ENCODE measurements at regions of chr19 and their contacts with region 1.

Region 1: DNA sequence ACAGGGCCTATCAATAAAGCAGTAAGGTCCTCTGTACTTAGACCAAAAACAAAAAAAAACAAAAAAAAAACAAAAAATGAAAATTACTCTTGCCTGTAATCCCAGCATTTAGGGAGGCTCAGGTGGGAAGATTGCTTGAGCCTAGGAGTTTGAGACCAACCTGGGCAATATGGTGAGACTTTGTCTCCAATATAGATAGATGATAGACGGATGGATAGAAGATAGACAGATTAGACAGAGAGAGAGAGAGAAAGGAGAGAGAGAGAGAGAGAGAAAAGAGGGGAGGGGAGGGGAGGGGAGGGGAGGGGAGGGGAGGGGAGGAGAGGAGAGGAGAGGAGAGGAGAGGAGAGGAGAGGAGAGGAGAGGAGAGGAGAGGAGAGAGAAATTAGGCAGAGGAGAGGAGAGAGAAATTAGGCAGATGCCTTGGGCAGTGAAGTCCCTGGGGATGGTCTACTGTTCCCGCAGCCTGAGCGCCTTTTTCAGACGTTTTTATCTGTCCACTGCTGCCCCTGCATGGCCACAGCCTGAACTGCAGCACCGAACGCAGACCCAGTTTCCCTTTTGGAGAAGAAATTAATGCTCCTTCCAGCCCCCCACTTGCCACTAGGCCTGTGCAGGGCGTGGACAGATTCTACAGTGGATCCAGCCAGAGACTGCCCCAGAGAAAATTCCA is 9.8 kb upstream of the ZNF627 start:
- DNase-seq: peak; percentile 80
- H3K4me3 ChIP-seq: no peak overlapping the region
- H3K27ac ChIP-seq: no peak overlapping the region
- H3K4me1 ChIP-seq: no peaks in the 10 kb centered on the region
- H3K27me3 ChIP-seq: no peaks in the 10 kb centered on the region
- CTCF ChIP-seq: peak; percentile 86

Region 2: DNA sequence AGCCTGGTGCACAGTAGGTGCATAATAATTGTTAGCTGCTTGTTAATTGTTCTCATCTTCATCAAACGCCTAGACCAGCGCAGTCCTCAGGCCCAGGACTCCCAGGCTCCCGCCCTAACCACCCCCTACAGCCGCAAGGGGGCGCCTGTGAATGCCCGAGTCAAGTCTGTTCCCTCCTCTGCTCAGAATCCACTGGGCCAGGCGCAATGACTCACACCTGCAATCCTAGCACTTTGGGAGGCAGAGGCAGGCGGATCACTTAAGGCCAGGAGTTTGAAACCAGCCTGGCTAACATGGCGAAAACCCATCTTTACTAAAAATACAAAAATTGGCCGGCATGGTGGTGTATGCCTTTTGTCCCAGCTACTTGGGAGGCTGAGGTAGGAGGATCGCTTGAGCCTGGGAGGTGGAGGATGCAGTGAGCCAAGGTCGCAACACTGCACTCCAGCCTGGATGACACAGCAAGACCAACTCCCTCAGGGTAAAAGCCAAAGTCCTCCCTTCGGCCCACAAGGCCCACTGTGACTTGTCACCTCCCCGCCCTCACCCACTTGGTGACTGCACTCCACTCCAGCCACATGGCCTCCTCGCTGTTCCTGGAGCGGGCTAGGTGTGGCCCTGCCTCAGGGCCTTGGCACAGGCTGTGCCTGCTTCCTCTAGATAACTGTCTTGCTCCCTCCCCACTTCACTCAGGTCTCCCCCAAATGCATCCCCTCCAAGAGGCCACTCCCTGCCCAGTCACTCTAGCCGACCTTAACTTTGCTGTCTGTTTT is 90.9 kb before region 1 on chr19:
- intact Hi-C with region 1: loop called (anchors 5 kb)
- DNase-seq: peak; percentile 72
- H3K4me3 ChIP-seq: no peak overlapping the region
- H3K27ac ChIP-seq: no peak overlapping the region
- H3K4me1 ChIP-seq: no peaks in the 10 kb centered on the region
- H3K27me3 ChIP-seq: no peaks in the 10 kb centered on the region
- CTCF ChIP-seq: peak; percentile 68

Region 3: DNA sequence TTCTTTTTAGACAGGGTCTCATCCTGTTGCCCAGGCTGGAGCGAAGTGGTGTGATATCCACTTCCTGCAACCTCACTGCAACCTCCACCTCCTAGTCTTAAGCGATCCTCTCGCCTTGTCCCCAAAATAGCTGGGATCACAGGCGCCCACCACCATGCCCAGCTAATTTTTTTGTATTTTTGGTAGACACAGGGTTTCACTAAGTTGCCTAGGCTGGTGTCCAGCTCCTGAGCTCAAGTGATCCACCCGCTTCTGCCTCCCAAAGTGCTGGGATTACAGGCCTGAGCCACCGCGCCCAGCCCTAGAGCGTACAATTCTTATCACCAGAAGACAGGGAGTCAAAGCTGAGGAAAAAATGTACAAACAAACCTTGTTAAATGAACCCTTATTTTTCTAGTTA is 23.9 kb before region 1 on chr19:
- intact Hi-C with region 1: loop called (anchors 2 kb)
- DNase-seq: no peak
- H3K4me3 ChIP-seq: no peak overlapping the region
- H3K27ac ChIP-seq: no peak overlapping the region
- H3K4me1 ChIP-seq: no peaks in the 10 kb centered on the region
- H3K27me3 ChIP-seq: no peaks in the 10 kb centered on the region
- CTCF ChIP-seq: no peak